ENCODE measurements at regions of chr10 and their contacts with region 1.

Region 1: GRCh38 chr10:80382989-80383388 is 25.4 kb upstream of the PRXL2A start:
- DNase-seq: no peak

Region 2: GRCh38 chr10:80444646-80445319 is 61.8 kb after region 1 on chr10:
- intact Hi-C with region 1: loop called (anchors 10 kb)
- DNase-seq: no peak

Region 3: DNA sequence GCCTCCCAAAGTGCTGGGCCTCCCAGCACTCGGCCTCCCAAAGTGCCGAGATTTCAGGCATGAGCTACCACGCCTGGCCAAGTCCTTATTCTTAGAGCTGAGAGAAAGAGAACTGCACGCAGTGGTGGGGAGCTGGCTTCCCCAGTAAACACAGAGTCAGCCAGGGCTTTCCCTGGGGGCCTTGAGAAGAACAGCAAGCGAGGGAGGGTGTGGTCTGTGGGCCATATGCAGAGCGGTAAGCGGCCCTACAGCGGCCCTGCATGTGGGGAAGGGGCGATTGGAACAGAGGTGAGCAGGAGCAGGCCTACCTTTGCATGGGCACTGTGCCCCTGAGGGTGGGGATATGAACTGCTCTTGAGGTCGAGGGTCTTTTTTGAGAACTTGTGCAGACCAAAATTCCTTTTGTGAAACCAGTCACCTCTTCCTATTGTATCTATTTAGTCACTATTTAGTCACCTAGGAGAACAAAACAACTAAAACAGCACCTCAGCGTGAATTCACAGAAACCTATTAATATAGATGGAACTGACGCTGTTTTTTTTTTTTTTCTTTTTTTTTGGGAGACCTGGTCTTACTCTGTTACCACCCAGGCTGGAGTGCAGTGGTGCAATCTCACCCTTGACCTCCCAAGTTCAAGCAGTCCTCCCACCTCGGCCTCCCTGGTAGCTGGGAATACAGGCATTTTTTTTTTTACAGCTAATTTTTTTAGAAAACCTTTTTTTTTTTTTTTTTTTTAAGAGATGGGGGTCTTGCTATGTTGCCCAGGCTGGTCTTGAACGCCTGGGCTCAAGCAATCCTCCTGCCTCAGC is 117.8 kb after region 1 on chr10:
- intact Hi-C with region 1: loop called (anchors 5 kb)
- DNase-seq: peak; percentile 73

Region 4: DNA sequence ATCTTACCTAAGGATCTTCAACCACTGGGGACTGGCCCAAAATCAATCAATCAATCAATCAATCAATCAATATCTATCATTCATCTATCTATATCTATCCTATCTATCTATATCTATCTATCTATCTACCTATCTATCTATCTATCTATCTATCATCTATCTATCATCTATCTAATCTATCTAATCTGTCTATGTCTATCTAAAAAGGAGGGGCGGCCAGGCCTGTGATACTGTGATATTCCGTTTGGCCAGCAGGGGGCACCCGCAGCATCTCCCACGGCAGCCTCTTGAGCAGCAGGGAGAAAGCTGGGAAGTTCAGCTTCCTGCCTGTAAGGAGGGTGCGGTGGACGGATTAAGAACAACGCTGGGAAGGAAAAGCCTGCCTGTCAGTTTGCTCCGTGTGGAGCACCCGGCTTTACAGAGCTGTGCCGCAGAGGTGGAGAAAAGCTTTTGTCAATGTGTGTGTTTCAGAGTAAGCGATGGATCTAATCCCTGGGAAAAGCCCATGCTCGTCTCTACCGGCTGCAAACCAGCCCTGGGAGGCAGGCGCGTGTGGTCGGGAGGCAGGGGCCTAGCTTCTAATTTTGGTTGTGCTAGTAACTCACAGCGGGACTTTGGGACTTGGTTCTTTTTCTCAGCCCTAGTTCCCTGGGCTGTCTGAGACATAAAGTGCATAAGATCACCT is 279.7 kb after region 1 on chr10:
- intact Hi-C with region 1: loop called (anchors 10 kb)
- DNase-seq: peak; percentile 91